ENCODE measurements at regions of chr10 and their contacts with region 1.

Region 1: DNA sequence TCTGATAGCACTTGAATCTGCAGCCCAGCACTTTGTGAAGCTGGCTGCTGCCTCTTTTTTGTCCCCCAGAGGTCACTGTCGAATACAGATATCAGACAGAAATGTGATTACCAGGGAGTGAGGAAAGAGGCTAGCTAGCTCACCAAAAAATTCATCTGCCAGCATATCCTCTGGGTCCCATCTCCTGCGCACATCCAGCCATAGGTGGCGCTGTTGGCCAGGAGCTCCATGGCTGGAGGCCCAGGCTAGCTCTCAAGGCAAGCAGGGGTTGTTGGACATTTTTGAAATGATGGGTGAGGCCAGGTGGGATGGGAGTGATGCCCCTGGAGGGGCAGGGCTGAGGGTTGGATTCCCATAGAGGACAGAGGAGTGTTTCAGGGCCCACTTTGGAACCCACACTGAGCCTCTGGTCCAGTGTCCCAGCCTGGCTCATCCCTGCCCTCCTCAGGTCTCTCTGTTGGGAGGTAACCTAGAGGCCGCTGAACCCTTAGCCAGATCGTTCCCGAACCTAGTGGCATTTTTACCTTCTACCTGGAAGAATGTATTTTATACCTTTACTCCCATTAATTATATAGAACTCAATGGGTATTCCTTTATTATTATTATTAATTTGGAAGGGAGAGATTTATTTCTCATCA is 14.8 kb downstream of the DPCD start:
- DNase-seq: peak; percentile 87
- H3K4me3 Mint-ChIP-seq: no peak overlapping the region
- H3K27ac Mint-ChIP-seq: no peak overlapping the region
- H3K4me1 Mint-ChIP-seq: no peaks in the 10 kb centered on the region
- H3K27me3 Mint-ChIP-seq: no peaks in the 10 kb centered on the region

Region 2: DNA sequence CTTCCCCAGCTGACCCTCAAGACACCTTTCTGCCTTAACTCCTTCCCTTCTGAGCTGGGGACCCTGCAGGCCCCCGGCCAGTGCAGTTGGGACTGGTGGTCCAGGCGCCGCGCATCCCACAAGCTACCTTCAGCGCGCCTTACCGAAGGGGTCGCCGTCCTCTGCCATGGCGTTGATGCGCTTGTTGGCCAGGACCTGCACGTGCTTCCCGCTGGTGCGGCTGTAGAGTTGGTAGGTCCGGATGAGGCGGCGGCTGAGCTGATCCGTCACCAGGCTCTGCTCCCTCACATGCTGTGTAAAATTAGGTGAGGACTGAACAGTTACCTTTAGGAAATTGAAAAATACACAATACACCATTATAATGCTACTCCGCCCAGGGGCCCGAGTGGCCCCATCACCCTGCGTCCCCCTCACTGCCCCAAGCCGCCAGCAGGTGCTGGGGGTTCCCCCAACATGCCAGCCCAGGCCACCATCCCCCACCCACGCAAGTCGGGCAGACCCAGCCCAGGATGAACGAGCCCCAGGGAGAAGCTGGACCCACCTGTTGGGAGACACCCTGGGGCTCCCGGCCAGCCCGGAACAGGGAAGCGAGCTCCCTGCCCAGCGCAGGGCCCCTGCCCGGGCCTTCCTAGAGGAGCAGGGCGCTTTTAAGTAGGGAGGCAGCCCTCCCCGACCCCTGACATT is 171.9 kb after region 1 on chr10:
- CTCF ChIA-PET with region 1: interaction called, 192 read pairs
- DNase-seq: no peak
- H3K4me3 Mint-ChIP-seq: no peak overlapping the region
- H3K27ac Mint-ChIP-seq: no peak overlapping the region
- H3K4me1 Mint-ChIP-seq: peaks cover 23% of the 10 kb centered on the region
- H3K27me3 Mint-ChIP-seq: peaks cover 94% of the 10 kb centered on the region

Region 3: DNA sequence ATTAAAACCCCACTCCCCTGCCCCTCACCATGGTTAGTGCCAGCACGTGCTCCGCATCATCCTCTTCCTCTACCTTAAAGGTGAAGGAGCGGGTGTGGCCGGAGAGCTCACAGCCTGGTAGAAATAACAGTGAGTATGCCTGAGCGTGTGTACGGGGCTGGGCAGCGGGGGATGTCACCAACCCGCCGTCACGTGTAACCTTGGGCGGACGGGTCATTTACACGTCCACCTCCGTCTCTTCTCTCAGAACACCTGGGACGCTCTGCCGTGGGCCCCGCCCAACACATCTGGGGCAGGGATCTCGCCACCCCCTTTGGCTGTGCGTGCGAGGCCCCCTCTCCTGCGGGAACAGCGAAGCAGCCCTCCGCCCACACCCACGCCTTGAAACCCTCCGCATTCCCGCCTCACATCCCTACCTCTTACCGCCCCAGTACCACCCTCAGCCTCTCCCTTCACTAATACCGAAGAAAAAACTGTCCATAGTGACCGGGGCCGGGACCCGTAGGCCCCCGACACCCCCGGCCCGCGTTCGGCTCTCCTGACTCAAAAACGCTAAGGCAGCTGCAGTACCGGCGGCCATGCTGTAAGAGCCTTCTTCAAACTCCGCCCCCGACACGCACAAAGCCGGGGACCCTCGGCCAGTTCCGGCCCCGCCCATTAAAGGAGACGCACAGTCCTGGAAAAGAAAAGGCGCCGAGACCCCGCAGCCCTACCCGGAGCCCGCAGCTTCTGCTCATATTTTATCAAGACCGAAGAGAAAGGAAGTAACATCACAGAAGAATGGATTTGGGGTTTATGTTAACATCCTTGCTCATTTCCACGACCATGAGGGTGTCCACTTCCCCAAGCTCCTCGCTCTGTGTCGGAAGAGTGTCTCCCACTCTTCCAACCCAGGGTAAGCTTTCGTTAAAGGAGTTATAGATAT is 180.2 kb after region 1 on chr10 and contains the start of gene NPM3:
- CTCF ChIA-PET with region 1: interaction called, 192 read pairs
- DNase-seq: peak; percentile 91
- H3K4me3 Mint-ChIP-seq: peak within 1 kb of the TSS; percentile 97
- H3K27ac Mint-ChIP-seq: peak within 1 kb of the TSS; percentile 94
- H3K4me1 Mint-ChIP-seq: peaks cover 65% of the 10 kb centered on the region
- H3K27me3 Mint-ChIP-seq: peaks cover 21% of the 10 kb centered on the region